Activated CD8-positive, alpha-beta T cell treated with anti-CD3 and anti-CD28 coated beads for 36 hours (primary cell): ENCODE measurements at regions of chr2 and their contacts with region 1.

Region 1: DNA sequence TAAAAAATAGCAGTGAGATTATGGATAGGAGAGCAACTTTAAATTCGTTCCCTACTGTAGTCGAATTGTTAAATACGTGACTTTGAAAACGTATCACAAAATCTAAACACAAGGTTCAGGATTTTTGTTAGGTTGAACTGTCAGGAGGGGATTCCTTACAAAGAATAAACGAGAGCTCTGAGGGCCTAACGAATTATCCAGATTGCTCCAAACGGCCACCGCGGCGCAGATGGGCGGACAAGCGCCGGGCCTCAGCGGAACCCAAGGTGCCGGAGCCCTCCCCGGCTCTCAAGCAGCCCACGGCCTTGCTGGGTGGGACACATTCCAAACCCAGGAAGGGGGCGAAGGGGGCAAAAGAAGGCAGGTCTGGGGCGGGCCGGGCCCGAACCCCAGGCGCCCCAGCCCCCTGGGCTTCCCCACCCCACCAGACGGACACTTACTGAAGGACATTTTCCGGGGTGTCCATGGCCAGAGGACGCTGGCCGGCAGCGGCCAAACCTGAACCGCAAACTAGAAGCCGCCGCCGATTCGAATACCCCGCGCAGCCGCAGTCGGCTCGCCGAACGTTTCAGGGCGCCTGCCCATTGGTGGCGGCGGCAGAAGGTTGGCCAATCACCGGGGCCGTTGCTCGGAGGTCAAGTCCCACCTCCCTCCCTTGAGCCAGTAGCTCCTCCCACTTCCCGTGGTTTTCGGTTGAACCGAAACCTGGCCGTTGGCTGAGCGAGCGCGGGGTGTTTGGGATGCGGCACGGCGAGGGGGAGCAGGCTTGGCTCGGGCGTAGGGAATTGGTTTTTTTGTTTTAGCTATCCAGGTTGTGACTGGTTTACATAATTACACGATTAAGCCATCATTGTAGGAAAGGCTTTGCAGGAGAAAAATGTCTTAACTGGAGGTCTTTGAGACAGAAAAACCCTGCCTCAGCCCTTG is at the start of gene BUB1:
- DNase-seq: peak; percentile 97
- ATAC-seq: peak; percentile 96
- H3K4me3 Mint-ChIP-seq: peak within 1 kb of the TSS; percentile 91
- H3K27ac Mint-ChIP-seq: peak within 1 kb of the TSS; percentile 95
- H3K4me1 Mint-ChIP-seq: peaks cover 25% of the 10 kb centered on the region
- H3K27me3 Mint-ChIP-seq: peaks cover 5% of the 10 kb centered on the region
- CTCF ChIP-seq: no peak
- total RNA-seq, gene BUB1: 102 to 111 TPM

Region 2: DNA sequence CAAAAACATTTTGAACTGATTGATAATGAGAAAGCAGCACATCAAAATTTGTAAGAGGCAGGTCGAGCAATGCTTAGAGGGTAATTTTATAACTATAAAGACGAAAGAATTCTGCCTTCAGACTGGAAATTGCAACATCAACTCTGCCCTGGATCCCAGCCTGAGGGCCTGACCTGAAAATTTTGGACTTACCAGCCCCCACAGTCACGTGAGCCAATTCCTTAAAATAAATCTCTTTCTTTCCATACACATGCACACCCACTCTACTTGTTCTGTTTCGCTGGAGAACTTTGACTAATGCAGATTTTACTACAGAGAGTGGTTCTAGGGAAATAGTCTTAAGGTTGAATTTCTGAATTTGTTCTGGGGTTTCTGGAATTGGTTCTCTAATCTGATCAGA is 39.9 kb after region 1 on chr2:
- CTCF ChIA-PET with region 1: no interaction called
- POLR2A ChIA-PET with region 1: no interaction called
- intact Hi-C with region 1: no loop called
- DNase-seq: no peak
- ATAC-seq: no peak
- H3K4me3 Mint-ChIP-seq: no peak overlapping the region
- H3K27ac Mint-ChIP-seq: no peak overlapping the region
- H3K4me1 Mint-ChIP-seq: no peaks in the 10 kb centered on the region
- H3K27me3 Mint-ChIP-seq: peaks cover 22% of the 10 kb centered on the region
- CTCF ChIP-seq: no peak

Region 3: DNA sequence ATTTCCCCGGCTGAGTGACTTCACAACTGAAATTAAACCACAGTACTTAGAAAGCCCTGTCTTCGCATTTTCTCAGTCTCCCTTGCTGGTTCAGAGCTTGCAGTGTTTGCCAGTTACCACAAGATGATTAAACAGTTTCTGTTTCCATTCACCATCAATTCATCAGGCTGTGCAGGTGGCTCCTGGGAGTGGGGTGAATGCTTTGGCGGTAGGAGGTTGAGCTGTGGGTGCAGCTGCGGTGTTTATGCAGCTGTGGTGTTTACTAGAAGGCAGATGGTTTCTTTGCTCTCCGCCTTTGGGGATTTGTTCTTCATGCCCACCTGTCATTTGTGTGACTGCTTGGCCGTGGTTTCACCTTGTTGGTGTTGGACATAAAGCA is 70.7 kb after region 1 on chr2:
- CTCF ChIA-PET with region 1: interaction called, 25 read pairs
- POLR2A ChIA-PET with region 1: interaction called, 3 read pairs
- intact Hi-C with region 1: loop called (anchors 5 kb)
- DNase-seq: peak; percentile 88
- ATAC-seq: peak; percentile 95
- H3K4me3 Mint-ChIP-seq: peak overlapping the region; percentile 37
- H3K27ac Mint-ChIP-seq: peak overlapping the region; percentile 46
- H3K4me1 Mint-ChIP-seq: peaks cover 21% of the 10 kb centered on the region
- H3K27me3 Mint-ChIP-seq: peaks cover 58% of the 10 kb centered on the region
- CTCF ChIP-seq: no peak

Region 4: GRCh38 chr2:110755491-110756078 is 77.8 kb after region 1 on chr2:
- CTCF ChIA-PET with region 1: interaction called, 25 read pairs
- POLR2A ChIA-PET with region 1: no interaction called
- intact Hi-C with region 1: no loop called
- DNase-seq: no peak
- ATAC-seq: no peak
- H3K4me3 Mint-ChIP-seq: no peak overlapping the region
- H3K27ac Mint-ChIP-seq: no peak overlapping the region
- H3K4me1 Mint-ChIP-seq: no peaks in the 10 kb centered on the region
- H3K27me3 Mint-ChIP-seq: peaks cover 26% of the 10 kb centered on the region
- CTCF ChIP-seq: peak; percentile 72